ENCODE measurements at regions of chr10 and their contacts with region 1.

Region 1: DNA sequence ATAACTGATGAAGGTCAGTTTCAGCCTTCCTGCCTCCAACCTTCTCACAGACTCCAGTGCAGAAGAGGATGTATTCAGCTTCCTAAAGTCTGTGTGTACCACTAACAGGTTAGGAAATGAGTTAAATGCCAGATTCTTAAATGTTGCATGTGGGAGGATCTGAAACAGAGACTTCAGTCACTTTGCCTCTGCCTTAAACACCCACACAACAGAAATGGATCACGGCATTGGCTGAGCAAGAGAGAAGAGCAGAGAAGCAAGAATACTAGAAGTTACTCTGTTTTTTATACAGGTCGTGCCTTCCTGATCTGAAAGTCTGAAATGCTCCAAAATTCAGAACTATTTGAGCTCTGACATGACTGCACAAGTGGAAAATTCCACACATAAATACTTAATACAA is 98.9 kb upstream of the ARHGAP21 start:
- DNase-seq: peak; percentile 52
- H3K4me3 Mint-ChIP-seq: no peak overlapping the region
- H3K27ac Mint-ChIP-seq: no peak overlapping the region
- H3K4me1 Mint-ChIP-seq: peaks cover 36% of the 10 kb centered on the region
- H3K27me3 Mint-ChIP-seq: no peaks in the 10 kb centered on the region

Region 2: GRCh38 chr10:24771941-24772694 is 50.5 kb before region 1 on chr10:
- CTCF ChIA-PET with region 1: no interaction called
- POLR2A ChIA-PET with region 1: no interaction called
- intact Hi-C with region 1: no loop called
- DNase-seq: no peak
- H3K4me3 Mint-ChIP-seq: no peak overlapping the region
- H3K27ac Mint-ChIP-seq: no peak overlapping the region
- H3K4me1 Mint-ChIP-seq: peaks cover 7% of the 10 kb centered on the region
- H3K27me3 Mint-ChIP-seq: no peaks in the 10 kb centered on the region

Region 3: GRCh38 chr10:24947304-24948097 is 124.9 kb after region 1 on chr10:
- CTCF ChIA-PET with region 1: interaction called, 3 read pairs
- POLR2A ChIA-PET with region 1: no interaction called
- intact Hi-C with region 1: loop called (anchors 2 kb)
- DNase-seq: no peak
- H3K4me3 Mint-ChIP-seq: no peak overlapping the region
- H3K27ac Mint-ChIP-seq: no peak overlapping the region
- H3K4me1 Mint-ChIP-seq: peaks cover 29% of the 10 kb centered on the region
- H3K27me3 Mint-ChIP-seq: peaks cover 4% of the 10 kb centered on the region